ENCODE measurements at regions of chr3 and their contacts with region 1.

Region 1: GRCh38 chr3:29050155-29050554 is 230.7 kb upstream of the RBMS3 start:
- DNase-seq: no peak
- H3K4me3 ChIP-seq: no peak overlapping the region
- H3K4me3 Mint-ChIP-seq: no peak overlapping the region
- H3K27ac ChIP-seq: no peak overlapping the region
- H3K27ac Mint-ChIP-seq: no peak overlapping the region
- H3K4me1 ChIP-seq: no peaks in the 10 kb centered on the region
- H3K4me1 Mint-ChIP-seq: no peaks in the 10 kb centered on the region
- H3K27me3 ChIP-seq: no peaks in the 10 kb centered on the region
- H3K27me3 Mint-ChIP-seq: peaks cover 0 to 1% of the 10 kb centered on the region in 2 donors

Region 2: DNA sequence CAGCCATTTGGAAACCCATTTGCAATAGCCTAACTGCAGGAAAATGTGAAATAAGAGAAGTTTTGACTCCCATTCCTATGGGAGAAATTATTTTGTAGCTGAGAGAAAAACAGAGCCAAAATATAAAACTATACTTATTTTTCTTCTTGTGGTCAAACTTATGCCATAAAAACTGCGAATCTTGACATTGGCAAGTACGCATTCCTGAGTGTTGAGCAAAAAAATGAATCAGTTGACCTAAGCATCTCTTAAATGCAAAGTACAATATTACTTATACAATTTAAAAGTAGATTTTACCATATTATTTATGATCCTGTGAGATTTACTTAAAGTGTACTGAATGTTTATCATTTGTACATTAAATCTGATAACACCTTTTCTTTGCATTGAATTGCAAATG is 858.8 kb before region 1 on chr3:
- CTCF ChIA-PET with region 1: no interaction called
- POLR2A ChIA-PET with region 1: no interaction called
- intact Hi-C with region 1: no loop called
- DNase-seq: no peak
- H3K4me3 ChIP-seq: no peak overlapping the region
- H3K4me3 Mint-ChIP-seq: no peak overlapping the region
- H3K27ac ChIP-seq: no peak overlapping the region
- H3K27ac Mint-ChIP-seq: no peak overlapping the region
- H3K4me1 ChIP-seq: no peaks in the 10 kb centered on the region
- H3K4me1 Mint-ChIP-seq: no peaks in the 10 kb centered on the region
- H3K27me3 ChIP-seq: no peaks in the 10 kb centered on the region
- H3K27me3 Mint-ChIP-seq: no peaks in the 10 kb centered on the region

Region 3: GRCh38 chr3:29091599-29092189 is 41.5 kb after region 1 on chr3:
- CTCF ChIA-PET with region 1: no interaction called
- POLR2A ChIA-PET with region 1: no interaction called
- intact Hi-C with region 1: no loop called
- DNase-seq: no peak
- H3K4me3 ChIP-seq: no peak overlapping the region
- H3K4me3 Mint-ChIP-seq: no peak overlapping the region
- H3K27ac ChIP-seq: no peak overlapping the region
- H3K27ac Mint-ChIP-seq: no peak overlapping the region
- H3K4me1 ChIP-seq: no peaks in the 10 kb centered on the region
- H3K4me1 Mint-ChIP-seq: peaks cover 0 to 1% (median 0%) of the 10 kb centered on the region in 4 donors
- H3K27me3 ChIP-seq: no peaks in the 10 kb centered on the region
- H3K27me3 Mint-ChIP-seq: no peaks in the 10 kb centered on the region

Region 4: GRCh38 chr3:29212789-29213433 is 162.8 kb after region 1 on chr3:
- CTCF ChIA-PET with region 1: no interaction called
- POLR2A ChIA-PET with region 1: no interaction called
- intact Hi-C with region 1: loop called (anchors 2 kb)
- DNase-seq: no peak
- H3K4me3 ChIP-seq: no peak overlapping the region
- H3K4me3 Mint-ChIP-seq: no peak overlapping the region
- H3K27ac ChIP-seq: no peak overlapping the region
- H3K27ac Mint-ChIP-seq: no peak overlapping the region
- H3K4me1 ChIP-seq: no peaks in the 10 kb centered on the region
- H3K4me1 Mint-ChIP-seq: no peaks in the 10 kb centered on the region
- H3K27me3 ChIP-seq: no peaks in the 10 kb centered on the region
- H3K27me3 Mint-ChIP-seq: no peaks in the 10 kb centered on the region